ENCODE measurements at regions of chr7 and their contacts with region 1.

Region 1: GRCh38 chr7:32957326-32958045 is at the start of gene FKBP9:
- DNase-seq: peak; percentile 94
- total RNA-seq, gene FKBP9: 137 TPM

Region 2: DNA sequence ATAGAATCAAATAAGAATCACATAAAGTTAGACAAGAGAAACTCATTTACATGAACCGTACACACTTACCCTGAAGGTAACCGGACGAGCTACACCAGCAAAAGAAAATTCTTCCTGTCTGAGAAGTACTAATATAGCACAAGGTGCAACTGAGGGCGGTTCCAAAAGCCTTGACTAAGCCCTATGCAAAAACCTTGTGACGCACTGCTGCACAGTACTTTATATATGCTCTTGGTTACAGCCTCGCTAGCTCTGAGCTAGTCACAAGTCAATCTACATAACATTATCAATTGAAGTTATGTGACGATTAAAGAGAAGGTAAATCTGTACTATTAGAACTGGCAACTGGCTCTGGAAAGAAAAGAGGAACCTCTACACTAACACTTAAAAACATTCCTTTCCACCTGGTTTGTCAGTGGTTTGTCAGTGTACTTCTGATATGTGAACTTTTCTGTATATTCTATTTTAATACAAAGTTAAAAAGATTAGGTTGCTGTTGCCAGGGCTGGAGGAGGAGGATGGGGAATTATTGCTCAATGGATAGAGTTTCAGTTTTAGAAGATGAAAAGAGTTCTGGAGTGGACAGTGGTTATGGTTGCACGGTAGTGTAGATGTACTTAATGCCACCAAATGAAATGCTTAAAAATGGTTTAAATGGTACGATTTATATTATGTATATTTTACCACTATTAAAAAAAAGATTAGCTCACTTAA is 83.5 kb after region 1 on chr7:
- intact Hi-C with region 1: loop called (anchors 5 kb)
- DNase-seq: no peak

Region 3: DNA sequence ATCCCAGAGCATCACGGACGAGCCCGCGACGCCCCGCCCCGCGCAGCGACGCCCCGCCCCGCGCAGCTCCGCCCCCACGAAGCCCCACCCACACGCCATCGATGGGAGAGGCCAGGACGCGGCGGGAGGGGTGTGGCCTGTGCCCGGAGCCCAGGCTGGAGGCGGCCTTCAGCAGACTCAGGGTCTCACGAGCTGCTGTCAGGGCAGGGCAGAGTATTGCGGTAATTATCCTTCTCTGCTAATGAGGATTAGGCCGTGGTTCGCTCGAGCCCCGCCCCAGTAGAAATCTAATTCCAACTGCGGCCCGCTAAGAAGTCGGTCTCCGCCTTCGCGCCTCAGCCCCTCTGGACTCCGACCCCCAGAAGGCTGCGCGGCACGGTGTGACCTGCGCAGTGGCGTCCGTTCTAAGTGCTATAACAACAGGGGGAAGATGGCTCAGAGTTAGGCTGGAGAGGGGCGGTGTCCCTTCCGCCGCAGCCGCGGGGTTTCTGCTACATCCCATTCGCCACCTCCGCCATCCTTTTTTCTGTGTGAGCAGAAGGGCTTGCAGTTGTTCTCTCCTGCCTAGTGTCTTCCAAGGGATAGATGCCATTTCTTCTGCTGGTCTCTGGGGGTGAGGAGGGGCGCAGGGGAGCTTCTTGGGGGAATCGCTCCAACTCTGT is 105.4 kb after region 1 on chr7:
- intact Hi-C with region 1: loop called (anchors 5 kb)
- DNase-seq: peak; percentile 98

Region 4: GRCh38 chr7:33250421-33250871 is 293.0 kb after region 1 on chr7:
- intact Hi-C with region 1: no loop called
- DNase-seq: no peak

Region 5: GRCh38 chr7:33578166-33578565 is 620.7 kb after region 1 on chr7:
- intact Hi-C with region 1: no loop called
- DNase-seq: no peak